Astrocyte of the spinal cord (primary cell): ENCODE measurements at regions of chr18 and their contacts with region 1.

Region 1: GRCh38 chr18:3297025-3297984 is 35.4 kb downstream of the MYL12B start:
- DNase-seq: peak; percentile 93
- H3K4me3 ChIP-seq: peak overlapping the region; percentile 65
- CTCF ChIP-seq: peak; percentile 66

Region 2: GRCh38 chr18:3451183-3451988 is 154.1 kb after region 1 on chr18:
- in situ Hi-C with region 1: loop called (anchors 25 kb)
- DNase-seq: peak; percentile 96
- H3K4me3 ChIP-seq: peak overlapping the region; percentile 96
- CTCF ChIP-seq: no peak